Left cardiac atrium (tissue), 4 donors: ENCODE measurements at regions of chr11 and their contacts with region 1.

Region 1: DNA sequence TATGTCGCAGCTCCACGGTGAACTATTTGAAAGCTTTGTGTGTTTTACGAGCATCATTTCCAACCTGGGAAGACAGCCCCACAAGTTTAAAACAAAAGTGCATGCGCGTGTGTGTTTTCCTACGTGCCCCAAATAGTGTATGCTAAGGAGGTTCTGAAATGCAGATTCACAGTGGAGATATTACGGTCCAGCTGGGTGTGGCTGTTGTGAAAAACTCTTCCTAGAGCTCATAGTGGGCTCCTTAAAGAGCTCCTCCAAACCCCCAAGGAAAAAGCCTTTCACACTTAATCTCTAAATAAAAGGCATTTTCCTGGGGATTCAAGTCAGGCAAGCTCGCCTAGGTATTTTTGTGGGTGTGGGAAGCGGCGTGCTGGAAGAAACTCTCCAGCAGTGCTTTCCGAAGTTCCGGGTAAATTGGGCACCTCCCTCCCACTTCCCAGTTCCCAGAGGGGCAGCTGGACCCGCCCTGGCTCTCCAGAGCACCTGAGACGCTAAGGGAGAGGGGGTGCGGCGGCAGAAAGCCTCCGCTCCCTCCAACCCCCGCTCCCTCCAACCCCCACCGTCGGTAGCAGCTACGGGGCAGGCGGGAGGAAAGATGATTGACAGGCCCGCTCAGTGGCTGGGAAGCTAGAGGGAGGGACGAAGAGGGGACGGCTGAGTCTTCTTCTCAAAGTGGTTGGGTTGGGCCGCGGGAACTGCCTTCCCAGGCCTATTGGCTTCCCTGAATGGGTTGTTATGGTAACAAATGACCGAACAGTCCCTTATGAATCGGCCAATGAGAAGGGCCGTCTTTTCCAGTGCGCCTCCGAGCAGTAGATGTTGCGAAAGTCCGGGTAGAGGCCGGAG is 558 bp upstream of the PCF11 start:
- DNase-seq: peak; percentile 99
- ATAC-seq: peak; percentile 95 to 97

Region 2: GRCh38 chr11:82978422-82979099 is 177.8 kb before region 1 on chr11:
- intact Hi-C with region 1: loop called in 1 of 2 experiments (anchors 10 kb)
- DNase-seq: no peak
- ATAC-seq: no peak

Region 3: GRCh38 chr11:83193315-83194280 is 37.2 kb after region 1 on chr11 and contains the start of gene ANKRD42:
- intact Hi-C with region 1: loop called in 1 of 2 experiments (anchors 5 kb)
- DNase-seq: peak; percentile 96
- ATAC-seq: peak; percentile 97
- total RNA-seq, gene ANKRD42: 5.0 to 7.0 TPM